CD8-positive, alpha-beta memory T cell (primary cell): ENCODE measurements at regions of chr1 and their contacts with region 1.

Region 1: DNA sequence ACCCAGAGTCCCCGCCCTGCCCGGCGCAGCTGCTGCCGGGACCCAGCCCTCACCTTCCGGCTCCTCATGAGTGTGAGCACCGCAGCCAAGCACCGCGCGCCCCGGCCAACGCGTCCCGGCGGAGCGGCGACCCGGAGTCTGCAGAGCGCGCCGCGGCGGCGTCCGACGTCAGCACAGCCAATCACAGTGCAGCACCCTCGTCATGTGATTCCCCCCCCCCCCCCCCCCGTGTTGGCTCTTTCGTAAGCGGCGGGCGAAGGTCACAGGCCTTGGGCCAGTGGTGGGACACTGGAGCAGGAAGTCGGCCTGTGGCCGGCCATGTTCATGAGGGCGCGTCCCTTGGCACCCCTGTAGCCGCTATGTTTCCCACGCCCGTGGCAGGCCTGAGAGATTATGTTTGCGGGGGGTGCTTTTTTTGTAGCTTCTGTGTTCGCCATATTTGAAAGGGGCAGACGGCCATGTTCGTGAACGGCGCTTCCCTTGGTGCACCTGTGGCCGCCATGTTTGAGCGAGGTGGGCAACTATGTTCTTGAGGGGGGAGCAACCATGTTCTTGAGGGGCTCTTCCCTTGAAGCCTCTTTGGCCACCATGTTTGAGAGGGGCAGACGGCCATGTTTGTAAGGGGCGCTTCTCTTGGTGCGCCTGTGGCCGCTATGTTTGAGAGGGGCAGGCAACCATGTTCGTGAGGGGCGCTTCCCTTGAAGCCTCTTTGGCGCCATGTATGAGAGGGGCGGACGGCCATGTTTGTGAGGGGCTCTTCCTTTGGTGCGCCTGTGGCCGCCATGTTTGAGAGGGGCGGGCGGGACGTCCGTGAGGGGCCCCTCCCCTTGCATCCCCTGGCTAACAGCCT is at the start of gene C1orf174:
- DNase-seq: peak; percentile 90 to 99 (median 97)
- H3K4me3 ChIP-seq: peak within 1 kb of the TSS; percentile 91
- H3K4me3 Mint-ChIP-seq: peak within 1 kb of the TSS; percentile 87 to 97 (median 95)
- H3K27ac ChIP-seq: peak within 1 kb of the TSS; percentile 91
- H3K27ac Mint-ChIP-seq: peak within 1 kb of the TSS; percentile 84 to 98 (median 95)
- H3K4me1 ChIP-seq: peaks cover 49% of the 10 kb centered on the region
- H3K4me1 Mint-ChIP-seq: peaks cover 32 to 67% (median 54%) of the 10 kb centered on the region in 3 donors
- H3K27me3 ChIP-seq: no peaks in the 10 kb centered on the region
- H3K27me3 Mint-ChIP-seq: peaks cover 0 to 1% of the 10 kb centered on the region in 2 donors
- total RNA-seq, gene C1orf174: 49.7 to 51.8 TPM

Region 2: GRCh38 chr1:3803905-3804626 is 96.3 kb before region 1 on chr1:
- CTCF ChIA-PET with region 1: no interaction called
- POLR2A ChIA-PET with region 1: no interaction called
- DNase-seq: no peak
- H3K4me3 ChIP-seq: no peak overlapping the region
- H3K4me3 Mint-ChIP-seq: no peak overlapping the region
- H3K27ac ChIP-seq: peak overlapping the region; percentile 43
- H3K27ac Mint-ChIP-seq: peak overlapping the region in 1 of 8 donors; percentile 81
- H3K4me1 ChIP-seq: no peaks in the 10 kb centered on the region
- H3K4me1 Mint-ChIP-seq: peaks cover 5 to 6% (median 5%) of the 10 kb centered on the region in 3 donors
- H3K27me3 ChIP-seq: no peaks in the 10 kb centered on the region
- H3K27me3 Mint-ChIP-seq: peaks cover 30 to 64% of the 10 kb centered on the region in 2 donors

Region 3: DNA sequence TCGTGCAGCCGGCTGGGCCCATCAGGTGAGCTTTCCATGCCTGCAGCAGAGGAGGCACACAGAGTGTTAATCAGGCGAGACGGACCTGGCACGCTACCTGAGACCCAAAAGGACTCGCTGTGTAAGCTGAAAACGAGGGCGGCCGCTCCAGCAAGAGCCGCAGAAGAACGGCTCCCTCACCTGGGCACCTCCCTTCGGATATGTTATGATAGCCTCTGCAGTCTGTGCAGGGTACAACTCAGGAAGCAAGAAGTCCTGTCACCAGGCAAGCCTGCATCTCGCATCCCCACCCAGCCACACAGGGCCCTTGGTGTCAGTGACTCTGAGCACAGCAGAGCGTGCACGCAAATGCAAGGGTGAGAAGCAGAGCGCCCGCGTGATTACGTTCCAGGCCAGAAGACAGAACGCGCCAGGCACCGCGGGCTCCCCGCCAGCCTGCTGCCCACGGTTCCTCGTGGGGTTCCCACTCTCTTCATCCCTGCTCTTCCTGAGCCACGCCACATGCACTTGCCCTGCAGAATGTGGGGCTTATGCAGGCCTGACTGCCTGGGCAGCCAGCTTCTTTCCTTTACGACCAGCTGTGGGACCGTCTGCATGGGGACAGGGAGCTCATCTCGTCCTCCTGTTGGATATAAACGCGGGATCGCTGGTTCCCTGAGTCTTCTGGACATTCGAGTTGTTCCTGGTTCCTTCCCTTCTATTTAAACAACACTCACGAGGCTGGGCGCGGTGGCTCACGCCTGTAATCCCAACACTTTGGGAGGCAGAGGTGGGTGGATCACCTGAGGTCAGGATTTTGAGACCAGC is 83.8 kb before region 1 on chr1:
- CTCF ChIA-PET with region 1: no interaction called
- POLR2A ChIA-PET with region 1: no interaction called
- DNase-seq: no peak
- H3K4me3 ChIP-seq: no peak overlapping the region
- H3K4me3 Mint-ChIP-seq: no peak overlapping the region
- H3K27ac ChIP-seq: no peak overlapping the region
- H3K27ac Mint-ChIP-seq: no peak overlapping the region
- H3K4me1 ChIP-seq: no peaks in the 10 kb centered on the region
- H3K4me1 Mint-ChIP-seq: peaks cover 0 to under 1% (median 0%) of the 10 kb centered on the region in 3 donors
- H3K27me3 ChIP-seq: no peaks in the 10 kb centered on the region
- H3K27me3 Mint-ChIP-seq: peaks cover 0 to 1% of the 10 kb centered on the region in 2 donors

Region 4: DNA sequence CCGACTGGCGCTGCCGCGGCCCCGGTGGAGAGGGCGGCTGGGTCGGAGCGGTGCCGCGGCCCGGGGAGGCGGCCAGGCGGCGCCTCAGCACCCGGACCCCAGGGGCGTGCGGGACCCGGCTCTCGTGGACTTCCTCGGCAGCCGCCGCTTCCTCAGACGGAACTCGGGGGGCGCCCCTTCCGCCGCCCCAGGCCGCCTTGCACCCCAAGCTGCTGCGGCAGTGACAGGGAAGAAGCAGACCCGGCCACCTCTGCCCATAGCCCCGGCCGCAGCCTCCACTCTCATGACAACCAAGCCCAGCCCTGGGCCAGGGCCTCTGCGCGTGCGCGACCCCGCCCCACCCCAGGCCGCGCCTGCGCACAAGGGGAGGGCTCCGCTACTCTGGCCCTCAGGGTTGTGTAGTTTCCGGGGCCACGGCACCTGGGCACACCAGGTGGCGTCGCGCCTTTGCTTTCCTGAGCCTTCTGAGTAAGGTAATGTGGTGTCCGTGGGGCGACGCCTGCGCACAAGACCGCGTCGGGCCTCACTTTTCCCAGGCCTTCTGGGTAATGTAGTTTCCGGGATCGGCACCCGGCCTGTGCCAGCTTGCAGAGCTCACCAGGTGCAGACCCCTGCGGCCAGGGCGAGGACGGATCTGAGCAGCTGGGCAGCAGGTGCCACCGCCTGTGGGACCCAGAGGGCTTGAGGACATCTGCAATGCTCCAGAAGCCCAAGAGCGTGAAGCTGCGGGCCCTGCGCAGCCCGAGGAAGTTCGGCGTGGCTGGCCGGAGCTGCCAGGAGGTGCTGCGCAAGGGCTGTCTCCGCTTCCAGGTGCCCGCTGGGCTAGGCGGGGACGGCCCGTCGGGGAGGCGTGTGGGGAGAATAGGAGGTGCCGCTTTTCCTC is 43.2 kb before region 1 on chr1 and contains the starts of genes CEP104 and DFFB:
- CTCF ChIA-PET with region 1: interaction called, 15 read pairs
- POLR2A ChIA-PET with region 1: interaction called, 18 read pairs
- DNase-seq: peak; percentile 92 to 99 (median 98)
- H3K4me3 ChIP-seq: peak within 1 kb of the TSS; percentile 69
- H3K4me3 Mint-ChIP-seq: peak within 1 kb of the TSS; percentile 95 to 99 (median 96)
- H3K27ac ChIP-seq: peak within 1 kb of the TSS; percentile 57
- H3K27ac Mint-ChIP-seq: peak within 1 kb of the TSS; percentile 75 to 98 (median 93)
- H3K4me1 ChIP-seq: peaks cover 33% of the 10 kb centered on the region
- H3K4me1 Mint-ChIP-seq: peaks cover 30 to 58% (median 43%) of the 10 kb centered on the region in 3 donors
- H3K27me3 ChIP-seq: no peaks in the 10 kb centered on the region
- H3K27me3 Mint-ChIP-seq: peaks cover 0 to 3% of the 10 kb centered on the region in 2 donors
- total RNA-seq, gene CEP104: 45.0 to 47.0 TPM
- total RNA-seq, gene DFFB: 10.9 to 14.6 TPM

Region 5: DNA sequence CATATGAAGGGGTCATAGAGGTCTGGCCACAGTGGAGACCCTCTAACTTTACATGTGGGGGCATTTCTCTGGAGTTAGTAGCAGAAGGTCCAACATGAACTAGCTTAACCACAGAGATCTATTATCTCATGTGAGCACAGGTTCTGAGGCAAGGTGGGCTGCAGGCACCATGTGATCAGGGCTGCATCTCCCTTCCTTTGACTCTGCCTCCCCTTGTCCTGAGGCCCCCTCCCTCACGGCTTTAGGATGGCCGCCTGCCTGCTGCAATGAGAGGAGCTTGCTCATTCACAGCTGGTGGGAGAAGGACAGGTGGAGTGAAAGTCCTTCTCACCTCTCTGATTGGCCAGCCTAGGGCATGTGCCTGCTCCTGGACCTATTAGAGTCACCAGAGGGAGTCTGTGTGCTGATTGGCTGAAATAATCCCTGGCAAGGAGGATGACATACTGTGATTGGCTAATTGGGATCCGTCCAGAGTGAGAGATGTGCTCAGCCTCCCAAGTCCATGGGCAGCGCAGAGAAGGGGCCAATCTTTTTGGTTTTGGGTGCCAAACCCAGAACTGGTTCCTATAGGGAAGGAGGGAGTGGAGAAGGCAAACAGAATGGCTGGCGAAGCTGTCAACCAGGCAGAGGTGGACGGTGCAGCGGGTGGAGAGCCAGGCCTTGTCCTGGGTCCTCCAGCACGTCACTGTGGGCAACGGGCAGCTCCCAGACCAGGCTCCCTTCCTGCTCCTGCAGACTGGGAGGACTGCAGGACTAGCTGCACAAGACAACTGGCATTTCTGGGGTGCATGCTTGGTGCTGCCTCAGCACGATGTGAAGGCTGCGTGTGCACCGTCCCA is 39.1 kb after region 1 on chr1:
- CTCF ChIA-PET with region 1: no interaction called
- POLR2A ChIA-PET with region 1: no interaction called
- DNase-seq: no peak
- H3K4me3 ChIP-seq: no peak overlapping the region
- H3K4me3 Mint-ChIP-seq: no peak overlapping the region
- H3K27ac ChIP-seq: no peak overlapping the region
- H3K27ac Mint-ChIP-seq: no peak overlapping the region
- H3K4me1 ChIP-seq: no peaks in the 10 kb centered on the region
- H3K4me1 Mint-ChIP-seq: no peaks in the 10 kb centered on the region
- H3K27me3 ChIP-seq: no peaks in the 10 kb centered on the region
- H3K27me3 Mint-ChIP-seq: peaks cover 9 to 26% of the 10 kb centered on the region in 2 donors